Esophagus muscularis mucosa (tissue), 4 donors: ENCODE measurements at regions of chr17 and their contacts with region 1.

Region 1: GRCh38 chr17:48791128-48792032 is 25.6 kb downstream of the TTLL6 start:
- DNase-seq: peak; percentile 94
- H3K4me3 ChIP-seq: no peak overlapping the region
- H3K27ac ChIP-seq: no peak overlapping the region
- H3K4me1 ChIP-seq: peaks cover 0 to 14% (median 5%) of the 10 kb centered on the region in 4 donors
- H3K27me3 ChIP-seq: peaks cover 0 to 24% (median 5%) of the 10 kb centered on the region in 4 donors
- CTCF ChIP-seq: peak; percentile 72 to 73 (median 73)
- EP300 ChIP-seq: no peak
- POLR2A ChIP-seq: no peak

Region 2: DNA sequence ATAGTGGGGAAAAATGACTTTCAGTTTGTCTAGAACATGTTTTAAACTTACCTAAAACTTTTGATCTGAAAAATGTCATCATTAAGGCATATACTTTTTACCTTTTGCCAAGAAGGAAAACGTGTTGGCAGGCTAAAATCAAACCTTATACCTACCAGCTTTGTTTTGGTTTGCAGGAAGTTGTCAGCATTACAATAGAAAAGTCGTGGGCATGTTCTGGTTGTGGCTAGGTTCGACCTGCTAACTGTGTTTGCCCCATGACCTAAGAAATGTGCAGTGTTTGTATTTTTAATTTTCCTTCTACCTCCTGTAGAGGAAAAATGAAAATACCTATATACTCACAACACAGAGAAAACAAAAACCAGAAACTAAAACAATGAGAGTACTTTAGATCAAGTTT is 374.4 kb before region 1 on chr17:
- intact Hi-C with region 1: no loop called
- DNase-seq: no peak
- H3K4me3 ChIP-seq: no peak overlapping the region
- H3K27ac ChIP-seq: no peak overlapping the region
- H3K4me1 ChIP-seq: no peaks in the 10 kb centered on the region
- H3K27me3 ChIP-seq: peaks cover 0 to 29% (median 4%) of the 10 kb centered on the region in 4 donors
- CTCF ChIP-seq: no peak
- EP300 ChIP-seq: no peak
- POLR2A ChIP-seq: no peak

Region 3: DNA sequence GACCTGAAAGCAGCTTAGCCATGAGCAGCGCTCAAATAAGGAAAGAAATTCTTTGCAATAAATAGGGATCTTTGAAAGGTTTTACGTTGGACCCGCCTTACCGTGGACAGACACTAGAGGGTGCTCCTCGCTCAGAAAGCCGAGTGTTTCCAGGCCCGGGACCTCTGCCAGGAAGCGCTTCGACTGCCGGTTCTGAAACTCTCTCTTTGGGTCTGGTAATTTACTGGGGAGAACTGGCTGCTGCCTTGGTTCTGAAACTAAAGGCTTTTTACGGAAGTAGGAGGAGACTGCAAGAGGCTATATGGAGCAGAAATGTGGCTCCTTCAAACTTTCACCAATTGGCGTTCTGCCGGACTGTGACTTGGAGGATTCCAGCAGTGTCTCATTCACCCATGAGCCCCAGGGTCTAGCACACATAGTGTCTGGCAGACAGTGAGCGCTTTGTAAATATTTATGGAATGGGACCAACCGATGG is 119.6 kb before region 1 on chr17:
- intact Hi-C with region 1: loop called (anchors 5 kb)
- DNase-seq: peak; percentile 96
- H3K4me3 ChIP-seq: peak overlapping the region; percentile 28 to 49 (median 36)
- H3K27ac ChIP-seq: peak overlapping the region in 2 of 4 donors; percentile 0 to 42
- H3K4me1 ChIP-seq: peaks cover 10 to 14% (median 12%) of the 10 kb centered on the region in 4 donors
- H3K27me3 ChIP-seq: peaks cover 0 to 58% (median 4%) of the 10 kb centered on the region in 4 donors
- CTCF ChIP-seq: peak; percentile 90 to 94 (median 93)
- EP300 ChIP-seq: no peak
- POLR2A ChIP-seq: no peak

Region 4: DNA sequence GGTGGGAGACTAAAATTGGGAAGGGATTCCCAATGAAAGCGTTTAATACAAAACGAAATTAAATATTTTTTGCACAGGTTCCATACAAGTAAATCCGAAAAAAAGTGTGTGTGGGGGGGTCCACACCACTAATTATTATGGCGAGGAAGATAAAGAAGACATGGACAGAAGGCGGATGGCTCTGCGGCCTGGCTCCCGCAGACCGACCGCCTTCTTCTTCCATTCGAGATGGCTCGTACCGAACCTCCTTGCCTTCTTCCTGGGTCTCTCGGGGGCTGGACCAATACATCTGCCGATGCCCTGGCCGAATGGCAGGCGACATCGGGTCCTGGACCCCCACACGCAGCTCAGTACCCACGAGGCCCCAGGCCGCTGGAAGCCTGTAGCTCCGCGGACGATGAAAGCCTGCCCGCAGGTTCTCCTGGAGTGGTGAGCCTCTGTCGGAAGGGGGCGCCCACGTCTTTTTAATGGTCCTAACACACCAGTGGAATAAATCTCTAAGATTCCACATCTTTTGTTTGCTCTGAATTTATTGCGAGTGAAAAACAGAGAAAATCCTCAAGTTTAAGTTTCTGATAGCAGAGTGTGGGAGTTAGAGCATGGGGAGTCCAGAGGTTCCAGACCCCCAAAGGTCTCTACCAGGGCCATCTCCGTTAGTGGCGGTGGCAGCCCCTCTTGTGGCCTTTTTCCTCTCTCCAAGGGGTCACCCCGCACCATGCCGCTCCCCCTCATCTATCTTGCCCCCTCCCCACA is 67.0 kb before region 1 on chr17:
- intact Hi-C with region 1: loop called (anchors 1 kb)
- DNase-seq: peak; percentile 96
- H3K4me3 ChIP-seq: peak overlapping the region in 2 of 4 donors; percentile 16 to 28
- H3K27ac ChIP-seq: no peak overlapping the region
- H3K4me1 ChIP-seq: peaks cover 23 to 62% (median 46%) of the 10 kb centered on the region in 4 donors
- H3K27me3 ChIP-seq: peaks cover 11 to 100% (median 100%) of the 10 kb centered on the region in 4 donors
- CTCF ChIP-seq: peak; percentile 70 to 81 (median 72)
- EP300 ChIP-seq: no peak
- POLR2A ChIP-seq: no peak

Region 5: GRCh38 chr17:48816774-48817590 is 25.6 kb after region 1 on chr17 and contains the start of gene TTLL6:
- intact Hi-C with region 1: no loop called
- DNase-seq: peak; percentile 93
- H3K4me3 ChIP-seq: peak within 1 kb of the TSS; percentile 48 to 60 (median 52)
- H3K27ac ChIP-seq: peak within 1 kb of the TSS in 1 of 4 donors; percentile 26
- H3K4me1 ChIP-seq: peaks cover 12 to 21% (median 18%) of the 10 kb centered on the region in 4 donors
- H3K27me3 ChIP-seq: peaks cover 0 to 65% (median 13%) of the 10 kb centered on the region in 4 donors
- CTCF ChIP-seq: peak in 1 of 3 experiments; percentile 11
- EP300 ChIP-seq: no peak
- POLR2A ChIP-seq: no peak
- total RNA-seq, gene TTLL6: under 0.01 to 1.1 (median 0.29) TPM in 3 of 4 donors, not detected in the other